ENCODE measurements at regions of chr7 and their contacts with region 1.

Region 1: DNA sequence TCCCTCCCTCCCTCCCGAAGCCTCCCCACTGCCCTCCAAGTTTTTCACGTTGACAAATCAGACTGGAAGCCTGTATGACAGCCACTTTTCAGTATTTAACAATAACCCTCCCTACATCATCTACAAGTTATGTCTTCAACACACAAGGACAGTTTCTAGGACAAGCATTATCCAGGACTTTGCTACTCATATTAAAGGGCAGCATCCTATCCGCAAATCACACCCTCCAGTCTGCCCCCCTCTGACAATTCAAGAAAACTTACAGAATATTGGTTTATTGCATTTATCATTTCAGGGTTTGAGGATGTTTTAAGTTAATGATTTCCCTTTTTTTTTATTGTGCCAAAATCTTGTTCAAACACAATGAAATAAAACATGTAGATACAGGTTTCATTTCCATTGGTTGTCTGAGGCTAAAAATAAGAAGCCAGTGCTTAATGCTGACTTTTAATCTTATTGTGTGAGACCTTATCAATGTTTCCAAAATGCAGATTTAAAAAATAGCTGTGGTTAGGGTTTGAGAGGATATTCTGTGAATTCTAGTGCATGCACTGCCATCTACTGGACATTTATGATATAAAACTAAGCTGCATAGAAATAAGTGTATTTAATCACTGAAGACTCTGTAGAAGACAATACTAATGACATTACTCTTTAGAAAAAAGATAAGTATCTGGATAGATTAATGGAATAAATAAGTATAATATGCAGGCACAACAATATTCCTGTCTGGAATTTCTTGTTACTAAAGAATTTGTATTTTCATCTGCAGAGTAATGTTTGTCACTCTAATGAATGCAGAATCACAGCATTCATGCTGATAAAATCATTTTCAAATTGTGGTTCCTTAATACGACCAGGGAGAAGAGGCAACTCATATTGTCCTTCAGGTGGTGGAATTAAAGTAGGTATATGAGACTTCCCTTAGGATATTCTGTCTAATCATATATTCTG is 64.1 kb downstream of the CAV1 start:
- DNase-seq: no peak
- ATAC-seq: peak; percentile 41
- H3K4me3 Mint-ChIP-seq: no peak overlapping the region
- H3K27ac Mint-ChIP-seq: no peak overlapping the region
- H3K4me1 Mint-ChIP-seq: peaks cover 30% of the 10 kb centered on the region
- H3K27me3 Mint-ChIP-seq: peaks cover 28% of the 10 kb centered on the region

Region 2: GRCh38 chr7:116173051-116174028 is 415.6 kb before region 1 on chr7:
- CTCF ChIA-PET with region 1: interaction called, 17 read pairs
- DNase-seq: no peak
- ATAC-seq: peak; percentile 45
- H3K4me3 Mint-ChIP-seq: no peak overlapping the region
- H3K27ac Mint-ChIP-seq: no peak overlapping the region
- H3K4me1 Mint-ChIP-seq: peaks cover 8% of the 10 kb centered on the region
- H3K27me3 Mint-ChIP-seq: peaks cover 15% of the 10 kb centered on the region

Region 3: DNA sequence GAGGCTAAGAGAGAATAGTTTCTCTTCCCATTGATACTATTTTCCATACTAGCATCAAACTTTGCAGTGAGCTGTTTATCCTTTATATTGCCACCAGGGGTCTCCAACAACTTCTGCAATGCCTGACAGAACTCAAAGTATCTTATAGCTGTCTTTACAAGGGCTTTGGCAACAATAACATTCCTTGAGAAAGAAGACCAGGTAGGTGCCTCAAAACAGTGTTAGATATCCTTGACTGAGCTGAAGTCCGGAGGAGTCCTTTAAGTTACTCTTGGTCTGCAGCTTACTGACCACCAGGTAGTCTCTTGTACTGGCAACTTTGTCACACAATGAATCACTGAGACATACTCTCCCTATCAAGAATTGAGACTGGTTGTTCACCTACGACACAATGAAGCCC is 408.6 kb before region 1 on chr7:
- CTCF ChIA-PET with region 1: interaction called, 14 read pairs
- DNase-seq: no peak
- ATAC-seq: peak; percentile 77
- H3K4me3 Mint-ChIP-seq: no peak overlapping the region
- H3K27ac Mint-ChIP-seq: no peak overlapping the region
- H3K4me1 Mint-ChIP-seq: no peaks in the 10 kb centered on the region
- H3K27me3 Mint-ChIP-seq: no peaks in the 10 kb centered on the region

Region 4: GRCh38 chr7:116258734-116259133 is 330.2 kb before region 1 on chr7:
- CTCF ChIA-PET with region 1: interaction called, 27 read pairs
- DNase-seq: no peak
- ATAC-seq: no peak
- H3K4me3 Mint-ChIP-seq: no peak overlapping the region
- H3K27ac Mint-ChIP-seq: no peak overlapping the region
- H3K4me1 Mint-ChIP-seq: peaks cover 10% of the 10 kb centered on the region
- H3K27me3 Mint-ChIP-seq: no peaks in the 10 kb centered on the region

Region 5: DNA sequence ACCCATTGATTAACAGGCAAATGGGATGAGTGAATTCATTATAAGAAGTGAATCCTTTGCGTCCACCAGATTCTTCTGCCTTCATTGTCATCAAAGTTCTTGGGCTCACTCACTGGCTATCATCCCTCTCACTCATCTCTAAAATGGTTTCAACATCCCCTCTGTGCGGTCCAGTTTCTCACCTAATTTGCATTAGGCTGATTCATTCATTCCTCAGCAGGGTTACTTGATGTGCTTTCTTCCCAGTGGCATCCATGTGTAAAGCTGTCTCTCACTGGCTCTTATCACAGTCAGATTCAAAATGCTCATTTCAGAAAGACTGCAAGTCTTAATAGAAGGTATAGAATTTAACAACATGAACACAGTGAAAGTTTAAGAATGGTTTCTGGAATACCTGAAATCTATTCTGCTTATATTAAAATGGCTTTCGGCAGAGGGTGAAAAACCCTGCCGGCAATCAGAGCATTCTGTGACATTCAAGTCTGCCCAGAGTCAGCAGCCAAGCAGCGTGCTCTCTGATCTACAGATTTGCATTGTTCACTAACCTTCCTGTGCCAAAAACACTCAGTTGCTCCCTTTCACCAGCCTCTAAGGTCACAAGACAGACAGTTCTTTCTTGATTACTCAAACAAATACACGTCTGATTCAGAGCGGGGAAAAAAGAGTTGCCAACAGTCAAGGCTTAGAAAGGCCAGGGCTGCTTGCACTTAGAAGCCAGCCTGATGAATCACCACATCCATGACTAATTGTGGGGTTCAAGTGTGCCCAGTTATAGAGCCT is 271.9 kb before region 1 on chr7:
- CTCF ChIA-PET with region 1: no interaction called
- DNase-seq: peak; percentile 53
- ATAC-seq: peak; percentile 81
- H3K4me3 Mint-ChIP-seq: no peak overlapping the region
- H3K27ac Mint-ChIP-seq: no peak overlapping the region
- H3K4me1 Mint-ChIP-seq: peaks cover 12% of the 10 kb centered on the region
- H3K27me3 Mint-ChIP-seq: peaks cover 24% of the 10 kb centered on the region

Region 6: DNA sequence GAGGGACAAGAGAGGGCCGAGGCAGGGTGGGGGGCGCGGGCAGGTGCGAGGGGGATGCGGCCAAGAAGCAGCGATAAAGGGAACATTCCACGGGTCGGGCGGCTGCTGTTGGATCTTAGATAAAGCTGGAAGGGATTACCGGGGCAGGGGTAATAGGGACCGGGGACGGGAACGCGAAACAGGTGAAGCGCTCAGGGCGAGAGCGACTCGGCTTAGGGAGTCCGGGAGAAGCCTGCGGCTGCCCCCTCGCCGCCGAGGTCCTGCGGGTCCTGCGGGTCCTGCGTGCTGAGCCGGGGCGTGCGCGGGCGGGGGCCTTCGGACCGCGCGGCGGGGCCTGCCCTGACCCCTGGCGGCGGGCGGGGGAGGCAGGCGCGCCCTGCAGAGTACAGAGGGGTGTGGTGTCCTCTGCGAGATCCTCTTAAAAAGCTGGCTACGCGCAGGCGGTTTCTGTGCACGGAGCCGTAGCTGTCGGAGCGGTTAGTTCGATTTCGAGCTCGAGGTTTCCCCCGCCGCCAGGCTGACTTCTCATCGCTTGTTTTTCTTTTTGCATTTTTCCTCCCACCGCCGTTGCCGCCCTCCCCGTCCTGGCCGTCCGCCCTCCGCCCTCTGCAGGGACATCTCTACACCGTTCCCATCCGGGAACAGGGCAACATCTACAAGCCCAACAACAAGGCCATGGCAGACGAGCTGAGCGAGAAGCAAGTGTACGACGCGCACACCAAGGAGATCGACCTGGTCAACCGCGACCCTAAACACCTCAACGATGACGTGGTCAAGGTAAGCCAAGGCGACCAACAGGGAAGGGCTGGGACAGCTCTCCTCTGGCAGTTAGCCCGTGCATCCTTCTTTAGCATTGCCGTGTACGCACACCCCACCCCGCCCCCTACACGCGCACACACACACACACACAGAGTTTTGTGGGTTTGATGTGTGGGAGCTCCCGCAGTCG is 62.7 kb before region 1 on chr7:
- CTCF ChIA-PET with region 1: interaction called, 24 read pairs
- DNase-seq: peak; percentile 77
- ATAC-seq: peak; percentile 96
- H3K4me3 Mint-ChIP-seq: peak overlapping the region; percentile 82
- H3K27ac Mint-ChIP-seq: no peak overlapping the region
- H3K4me1 Mint-ChIP-seq: peaks cover 21% of the 10 kb centered on the region
- H3K27me3 Mint-ChIP-seq: peaks cover 80% of the 10 kb centered on the region

Region 7: DNA sequence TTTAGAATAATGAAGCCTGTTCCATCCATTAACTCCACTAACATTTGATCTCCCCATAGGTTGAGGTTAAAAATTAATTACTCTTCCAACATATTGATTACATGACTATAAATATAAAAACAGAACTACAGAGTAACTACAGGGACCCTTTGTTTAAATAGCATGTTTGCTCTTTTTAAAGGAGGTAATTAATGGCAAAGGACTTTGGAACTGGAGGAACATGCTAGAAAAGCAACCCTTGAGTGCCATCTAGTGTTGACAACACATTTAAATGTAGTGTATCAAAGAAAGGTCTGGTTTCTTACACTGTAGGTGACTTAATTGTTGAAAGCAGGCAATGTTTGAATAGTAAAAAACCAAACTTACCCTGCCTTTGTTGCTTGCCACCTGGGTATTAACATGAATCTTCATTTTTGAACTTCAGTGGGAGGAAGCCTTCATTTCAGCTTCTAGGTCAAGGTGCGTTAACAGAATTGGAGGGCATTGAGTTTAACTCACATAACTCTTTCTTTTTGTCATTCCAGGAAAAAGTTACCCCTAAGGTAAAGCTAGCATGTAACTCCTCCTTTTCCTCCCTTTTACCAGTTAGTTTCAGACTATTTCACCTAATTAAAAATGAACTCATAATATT is 220.8 kb after region 1 on chr7:
- CTCF ChIA-PET with region 1: interaction called, 19 read pairs
- DNase-seq: no peak
- ATAC-seq: peak; percentile 60
- H3K4me3 Mint-ChIP-seq: no peak overlapping the region
- H3K27ac Mint-ChIP-seq: no peak overlapping the region
- H3K4me1 Mint-ChIP-seq: no peaks in the 10 kb centered on the region
- H3K27me3 Mint-ChIP-seq: peaks cover 23% of the 10 kb centered on the region